ENCODE measurements at regions of chr16 and their contacts with region 1.

Region 1: DNA sequence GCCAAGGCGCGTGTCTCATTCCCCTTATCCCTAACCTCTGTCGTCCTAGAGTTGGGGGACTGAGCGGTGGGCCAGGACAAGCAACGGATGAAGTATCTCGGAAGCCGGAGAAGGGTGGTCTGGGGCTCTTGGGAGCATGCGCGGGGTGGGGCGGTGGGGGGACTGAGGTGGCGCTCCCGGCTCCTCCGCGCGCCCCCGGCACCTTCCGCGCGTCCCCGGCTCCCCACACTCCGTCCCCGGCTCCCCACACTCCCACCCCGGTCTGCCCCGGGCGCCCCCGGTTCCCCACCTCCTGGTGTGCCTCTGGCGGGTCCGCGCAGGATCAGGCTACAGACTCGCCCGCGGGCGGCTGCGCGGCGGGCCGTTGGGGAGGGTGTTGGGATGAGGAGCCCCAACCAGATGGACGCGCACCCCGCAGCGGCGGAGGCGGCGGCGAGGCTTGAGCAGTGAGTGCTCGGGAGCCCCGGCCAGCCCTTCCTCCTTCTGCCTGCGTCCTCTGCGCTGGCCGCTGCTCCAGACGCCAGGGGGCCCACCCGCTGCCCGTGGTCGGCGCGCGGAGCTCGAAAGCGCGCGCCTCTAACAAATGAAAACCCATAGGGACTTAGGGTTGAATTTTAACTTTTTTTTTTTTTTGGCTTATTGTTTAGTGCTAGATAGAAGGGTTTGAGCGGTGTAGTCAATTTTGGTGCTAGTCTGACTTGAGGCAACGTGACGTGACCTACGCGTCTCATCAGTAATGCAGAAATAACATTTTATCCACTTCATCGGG is 5.6 kb upstream of the CRYM start:
- DNase-seq: peak; percentile 31
- H3K4me3 ChIP-seq: peak overlapping the region; percentile 37
- H3K27ac ChIP-seq: no peak overlapping the region
- H3K4me1 ChIP-seq: no peaks in the 10 kb centered on the region
- H3K27me3 ChIP-seq: peaks cover 80% of the 10 kb centered on the region
- CTCF ChIP-seq: peak; percentile 41; the same call in 1 of the 2 replicates

Region 2: DNA sequence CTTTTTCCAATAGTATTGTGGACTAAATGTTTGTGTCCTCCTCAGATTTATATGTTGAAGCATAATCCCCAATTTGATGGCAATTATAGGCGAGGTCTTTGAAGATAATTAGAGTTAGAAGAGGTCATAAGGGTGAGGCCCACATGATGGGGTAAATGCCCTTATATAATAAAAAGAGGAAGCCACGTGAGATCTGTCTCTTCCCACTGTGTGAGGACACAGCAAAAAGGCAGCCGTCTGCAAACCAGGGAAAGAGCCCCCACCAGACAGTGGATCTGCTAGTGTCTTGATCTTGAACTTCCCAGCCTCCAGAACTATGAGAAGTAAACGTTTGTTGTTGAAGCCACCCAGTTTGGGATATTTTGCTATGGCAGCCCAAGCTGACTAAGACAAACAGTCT is 307.1 kb before region 1 on chr16:
- CTCF ChIA-PET with region 1: interaction called, 13 read pairs
- POLR2A ChIA-PET with region 1: no interaction called
- intact Hi-C with region 1: no loop called
- DNase-seq: no peak
- H3K4me3 ChIP-seq: no peak overlapping the region
- H3K27ac ChIP-seq: no peak overlapping the region
- H3K4me1 ChIP-seq: no peaks in the 10 kb centered on the region
- H3K27me3 ChIP-seq: no peaks in the 10 kb centered on the region
- CTCF ChIP-seq: no peak

Region 3: DNA sequence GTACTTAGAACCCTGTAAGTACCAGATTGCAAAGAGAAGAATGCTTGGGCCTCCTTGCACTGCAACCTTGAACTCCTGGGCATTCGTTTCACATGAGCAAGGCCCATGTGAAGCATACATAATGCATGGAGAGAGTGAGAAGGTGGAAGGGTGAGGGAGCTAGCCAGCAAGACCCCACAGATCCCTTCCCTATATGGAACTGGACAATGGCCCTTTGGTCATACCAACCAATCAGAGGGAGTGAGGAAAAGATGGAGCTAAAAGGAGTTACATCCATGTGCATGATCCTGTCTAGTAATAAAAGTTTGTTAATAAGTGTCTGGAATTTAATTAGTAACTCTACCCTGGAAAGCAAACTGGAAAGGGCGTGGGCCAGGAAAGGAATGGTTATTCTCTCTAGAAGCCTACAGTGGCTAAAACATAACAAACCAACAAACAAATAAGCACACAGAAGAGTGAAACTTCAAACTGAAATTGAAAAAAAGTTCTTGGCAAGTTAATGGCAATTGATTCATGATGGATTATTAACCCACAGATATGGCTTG is 162.7 kb before region 1 on chr16:
- CTCF ChIA-PET with region 1: no interaction called
- POLR2A ChIA-PET with region 1: no interaction called
- intact Hi-C with region 1: no loop called
- DNase-seq: no peak
- H3K4me3 ChIP-seq: no peak overlapping the region
- H3K27ac ChIP-seq: no peak overlapping the region
- H3K4me1 ChIP-seq: no peaks in the 10 kb centered on the region
- H3K27me3 ChIP-seq: no peaks in the 10 kb centered on the region
- CTCF ChIP-seq: no peak

Region 4: DNA sequence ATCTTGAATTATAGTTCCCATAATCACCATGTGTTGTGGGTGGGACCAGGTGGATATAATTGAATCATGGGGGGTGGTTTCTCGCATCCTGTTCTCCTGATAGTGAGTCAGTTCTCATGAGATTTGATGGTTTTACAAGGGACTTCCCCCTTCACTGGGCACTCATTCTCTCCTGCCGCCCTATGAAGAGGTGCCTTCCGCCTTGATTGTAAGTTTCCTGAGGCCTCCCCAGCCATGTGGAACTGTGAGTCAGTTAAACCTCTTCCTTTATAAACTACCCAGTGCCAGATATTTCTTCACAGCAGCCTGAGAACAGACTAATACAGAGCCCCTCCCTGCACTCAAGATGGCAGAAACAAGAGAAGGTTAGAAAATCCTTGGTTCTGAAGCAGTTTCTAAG is 98.9 kb before region 1 on chr16:
- CTCF ChIA-PET with region 1: interaction called, 3 read pairs
- POLR2A ChIA-PET with region 1: no interaction called
- intact Hi-C with region 1: loop called (anchors 5 kb)
- DNase-seq: no peak
- H3K4me3 ChIP-seq: no peak overlapping the region
- H3K27ac ChIP-seq: no peak overlapping the region
- H3K4me1 ChIP-seq: no peaks in the 10 kb centered on the region
- H3K27me3 ChIP-seq: no peaks in the 10 kb centered on the region
- CTCF ChIP-seq: no peak

Measured in A673 (cell line).